GM18951 (cell line): ENCODE measurements at regions of chr9 and their contacts with region 1.

Region 1: DNA sequence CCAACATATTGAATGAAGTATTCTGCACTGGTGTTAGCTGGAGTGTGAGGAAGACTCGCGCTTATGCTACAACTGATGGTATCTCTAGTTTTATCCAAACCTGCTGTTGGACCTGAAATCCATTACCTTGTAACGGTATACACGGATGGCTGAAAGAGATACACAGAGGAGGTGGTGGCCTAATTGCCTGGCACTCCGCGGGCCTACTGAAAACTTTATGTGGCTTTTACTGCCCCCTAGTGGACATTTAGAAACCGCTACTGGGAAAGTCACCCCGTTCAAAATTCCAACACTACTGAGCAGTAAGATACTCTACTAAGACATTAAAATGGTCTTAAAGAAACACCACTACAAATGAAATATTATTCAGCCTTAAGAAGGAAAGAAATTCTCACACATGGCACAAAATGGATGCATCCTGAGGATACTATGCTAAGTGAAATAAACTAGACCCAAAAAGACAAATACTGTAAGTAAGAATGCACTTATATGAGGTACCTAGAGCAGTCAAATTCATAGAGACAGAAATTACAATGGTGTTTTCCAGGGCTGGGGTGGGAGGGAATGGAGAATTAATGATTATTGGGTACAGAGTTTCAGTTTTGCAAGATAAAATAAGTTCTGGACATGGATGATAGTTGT is 100.4 kb downstream of the TTLL11 start:
- POLR2A ChIP-seq: no peak

Region 2: DNA sequence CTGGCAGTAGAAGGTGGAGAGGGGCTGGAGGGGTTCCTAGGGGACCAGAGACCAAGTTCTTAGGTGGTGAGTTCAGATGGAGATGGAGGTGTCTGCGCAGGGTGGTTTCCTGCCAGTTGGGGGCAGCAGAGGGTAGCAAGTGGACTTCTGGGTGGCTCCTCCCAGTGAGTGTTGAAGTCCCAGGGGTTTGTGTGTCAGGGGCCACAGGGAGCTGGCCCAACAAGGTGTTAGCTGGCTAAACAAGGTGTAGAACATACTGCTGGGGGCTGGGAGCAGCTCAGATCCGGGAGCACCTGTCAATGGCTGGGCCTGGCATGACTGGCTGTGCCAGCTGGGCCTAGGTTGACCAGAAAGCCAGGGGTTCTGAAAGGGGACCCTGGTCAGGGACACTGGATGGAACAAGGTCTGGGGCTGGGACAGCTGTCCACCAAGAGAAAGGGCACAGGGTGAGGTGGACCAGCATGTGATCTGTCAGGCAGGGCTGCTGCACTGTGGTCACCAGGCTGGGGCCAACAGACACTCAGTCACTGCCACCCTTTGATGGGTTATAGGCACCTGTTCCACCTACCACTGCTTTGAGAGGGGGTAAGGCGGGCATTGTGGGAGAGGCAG is 305.7 kb before region 1 on chr9:
- in situ Hi-C with region 1: loop called (anchors 10 kb)
- POLR2A ChIP-seq: no peak

Region 3: DNA sequence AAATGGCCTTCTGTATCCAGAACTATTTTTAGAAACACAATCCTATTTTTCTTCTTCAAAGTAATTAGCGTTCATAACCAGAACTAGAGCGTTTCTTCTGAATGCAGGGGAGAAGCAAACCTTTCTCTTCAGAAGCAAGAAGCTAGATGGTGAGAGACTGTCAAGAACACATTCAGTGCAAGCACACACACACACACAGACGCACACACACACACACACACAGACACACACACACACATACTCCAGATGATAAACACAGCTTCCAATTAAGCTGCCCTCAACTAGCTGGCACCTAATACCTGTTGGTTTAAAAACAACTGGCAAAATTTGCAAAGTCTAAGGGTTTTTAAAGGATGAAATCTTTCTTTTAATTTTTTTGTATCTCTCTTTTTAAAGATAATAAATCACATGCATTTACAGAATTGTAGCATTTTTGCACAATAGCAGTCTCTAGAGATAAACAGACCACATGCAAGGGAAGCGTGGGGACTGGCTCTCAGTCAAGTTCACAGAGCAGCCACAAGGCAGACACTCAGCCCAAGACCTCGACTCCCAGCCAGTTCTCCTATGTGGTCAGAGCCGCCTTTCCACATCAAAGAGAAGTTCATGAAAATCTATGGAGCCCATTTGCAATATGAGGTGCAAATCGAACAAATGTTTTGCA is 38.1 kb before region 1 on chr9:
- in situ Hi-C with region 1: no loop called
- POLR2A ChIP-seq: no peak

Region 4: GRCh38 chr9:122213589-122214413 is 221.1 kb after region 1 on chr9:
- in situ Hi-C with region 1: no loop called
- POLR2A ChIP-seq: no peak